Activated CD4-positive, alpha-beta T cell treated with anti-CD3 and anti-CD28 coated beads, Interleukin-2, amount 10 ng/mL, durations not matched to agents 24 days and 14 days (primary cell): ENCODE measurements at regions of chr3 and their contacts with region 1.

Region 1: GRCh38 chr3:50542177-50543034 is 25.1 kb downstream of the C3orf18 start:
- DNase-seq: peak; percentile 89
- H3K4me3 Mint-ChIP-seq: no peak overlapping the region
- H3K27ac Mint-ChIP-seq: no peak overlapping the region
- H3K4me1 Mint-ChIP-seq: no peaks in the 10 kb centered on the region
- H3K27me3 Mint-ChIP-seq: peaks cover 23% of the 10 kb centered on the region

Region 2: GRCh38 chr3:50350527-50351322 is 191.7 kb before region 1 on chr3 and contains the starts of genes CYB561D2 and NPRL2:
- intact Hi-C with region 1: loop called (anchors 1 kb)
- DNase-seq: peak; percentile 100
- H3K4me3 Mint-ChIP-seq: peak within 1 kb of the TSS; percentile 95
- H3K27ac Mint-ChIP-seq: peak within 1 kb of the TSS; percentile 97
- H3K4me1 Mint-ChIP-seq: peaks cover 40% of the 10 kb centered on the region
- H3K27me3 Mint-ChIP-seq: no peaks in the 10 kb centered on the region
- total RNA-seq, gene CYB561D2: 23.9 and 27.0 TPM in 2 replicates
- total RNA-seq, gene NPRL2: 38.1 and 43.0 TPM in 2 replicates

Region 3: GRCh38 chr3:50436114-50436674 is 106.2 kb before region 1 on chr3:
- intact Hi-C with region 1: loop called (anchors 1 kb)
- DNase-seq: peak; percentile 94
- H3K4me3 Mint-ChIP-seq: no peak overlapping the region
- H3K27ac Mint-ChIP-seq: no peak overlapping the region
- H3K4me1 Mint-ChIP-seq: peaks cover 4% of the 10 kb centered on the region
- H3K27me3 Mint-ChIP-seq: peaks cover 2% of the 10 kb centered on the region

Region 4: GRCh38 chr3:50519471-50520089 is 22.8 kb before region 1 on chr3:
- intact Hi-C with region 1: loop called (anchors 2 kb)
- DNase-seq: peak; percentile 93
- H3K4me3 Mint-ChIP-seq: no peak overlapping the region
- H3K27ac Mint-ChIP-seq: no peak overlapping the region
- H3K4me1 Mint-ChIP-seq: peaks cover 6% of the 10 kb centered on the region
- H3K27me3 Mint-ChIP-seq: peaks cover 26% of the 10 kb centered on the region

Region 5: GRCh38 chr3:50616770-50617095 is 74.3 kb after region 1 on chr3:
- intact Hi-C with region 1: loop called (anchors 2 kb)
- DNase-seq: peak; percentile 99
- H3K4me3 Mint-ChIP-seq: peak overlapping the region; percentile 91
- H3K27ac Mint-ChIP-seq: peak overlapping the region; percentile 89
- H3K4me1 Mint-ChIP-seq: peaks cover 63% of the 10 kb centered on the region
- H3K27me3 Mint-ChIP-seq: no peaks in the 10 kb centered on the region